Left cardiac atrium (tissue), 4 donors: ENCODE measurements at regions of chr15 and their contacts with region 1.

Region 1: GRCh38 chr15:49876401-49877038 is 242.5 kb downstream of the ATP8B4 start:
- DNase-seq: no peak
- ATAC-seq: peak; percentile 31 to 77

Region 2: GRCh38 chr15:49934488-49934887 is 58.0 kb after region 1 on chr15:
- intact Hi-C with region 1: loop called in 1 of 2 experiments (anchors 10 kb)
- DNase-seq: no peak
- ATAC-seq: no peak